Activated naive CD4-positive, alpha-beta T cell treated with anti-CD3 and anti-CD28 coated beads for 36 hours (primary cell): ENCODE measurements at regions of chr2 and their contacts with region 1.

Region 1: GRCh38 chr2:143259368-143259958 is 130.2 kb downstream of the ARHGAP15 start:
- DNase-seq: peak; percentile 89
- H3K4me3 Mint-ChIP-seq: peak overlapping the region; percentile 59
- H3K27ac Mint-ChIP-seq: peak overlapping the region; percentile 90
- H3K4me1 Mint-ChIP-seq: peaks cover 73% of the 10 kb centered on the region
- H3K27me3 Mint-ChIP-seq: no peaks in the 10 kb centered on the region

Region 2: GRCh38 chr2:143110758-143111428 is 148.6 kb before region 1 on chr2:
- CTCF ChIA-PET with region 1: interaction called, 99 read pairs
- intact Hi-C with region 1: loop called (anchors 1 kb)
- DNase-seq: peak; percentile 82
- H3K4me3 Mint-ChIP-seq: peak overlapping the region; percentile 59
- H3K27ac Mint-ChIP-seq: peak overlapping the region; percentile 90
- H3K4me1 Mint-ChIP-seq: peaks cover 46% of the 10 kb centered on the region
- H3K27me3 Mint-ChIP-seq: no peaks in the 10 kb centered on the region

Region 3: DNA sequence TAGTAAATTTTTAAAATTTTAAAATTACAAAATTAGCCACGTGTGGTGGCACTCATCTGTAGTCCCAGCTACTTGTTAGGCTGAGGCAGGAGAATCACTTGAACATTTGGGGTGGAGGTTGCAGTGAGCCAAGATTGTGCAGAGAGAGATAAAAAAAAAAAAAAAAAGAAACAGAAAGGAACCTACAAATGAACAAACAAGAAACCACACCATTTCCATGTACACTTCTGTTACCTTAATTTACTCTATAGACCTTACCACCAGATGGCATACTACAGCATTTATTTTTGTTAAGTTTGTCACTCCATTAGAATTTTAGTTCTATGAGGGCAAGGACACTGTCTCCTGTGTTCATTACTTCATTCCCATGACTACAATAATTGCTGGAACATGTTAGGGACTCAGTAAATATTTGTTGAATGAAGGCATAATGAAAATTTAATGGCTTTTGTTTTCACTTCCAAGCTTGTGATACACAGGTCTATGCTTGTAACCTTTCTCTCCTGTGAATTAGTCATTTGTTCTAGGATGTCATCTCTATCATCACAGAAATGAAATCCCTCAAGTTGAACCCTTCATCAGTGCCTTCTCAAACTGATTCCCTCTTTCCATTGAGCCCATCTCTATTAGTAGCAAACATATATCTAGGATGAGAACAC is 54.2 kb before region 1 on chr2:
- CTCF ChIA-PET with region 1: interaction called, 15 read pairs
- intact Hi-C with region 1: loop called (anchors 1 kb)
- DNase-seq: no peak
- H3K4me3 Mint-ChIP-seq: no peak overlapping the region
- H3K27ac Mint-ChIP-seq: peak overlapping the region; percentile 78
- H3K4me1 Mint-ChIP-seq: peaks cover 53% of the 10 kb centered on the region
- H3K27me3 Mint-ChIP-seq: no peaks in the 10 kb centered on the region

Region 4: GRCh38 chr2:143246815-143247744 is 12.4 kb before region 1 on chr2:
- CTCF ChIA-PET with region 1: interaction called, 17 read pairs
- intact Hi-C with region 1: no loop called
- DNase-seq: peak; percentile 27
- H3K4me3 Mint-ChIP-seq: peak overlapping the region; percentile 44
- H3K27ac Mint-ChIP-seq: peak overlapping the region; percentile 43
- H3K4me1 Mint-ChIP-seq: peaks cover 30% of the 10 kb centered on the region
- H3K27me3 Mint-ChIP-seq: no peaks in the 10 kb centered on the region

Region 5: GRCh38 chr2:143477714-143478443 is 218.4 kb after region 1 on chr2:
- CTCF ChIA-PET with region 1: no interaction called
- intact Hi-C with region 1: no loop called
- DNase-seq: no peak
- H3K4me3 Mint-ChIP-seq: no peak overlapping the region
- H3K27ac Mint-ChIP-seq: no peak overlapping the region
- H3K4me1 Mint-ChIP-seq: peaks cover 35% of the 10 kb centered on the region
- H3K27me3 Mint-ChIP-seq: no peaks in the 10 kb centered on the region

Region 6: GRCh38 chr2:143696651-143697050 is 437.2 kb after region 1 on chr2:
- CTCF ChIA-PET with region 1: no interaction called
- intact Hi-C with region 1: loop called (anchors 1 kb)
- DNase-seq: no peak
- H3K4me3 Mint-ChIP-seq: no peak overlapping the region
- H3K27ac Mint-ChIP-seq: no peak overlapping the region
- H3K4me1 Mint-ChIP-seq: peaks cover 39% of the 10 kb centered on the region
- H3K27me3 Mint-ChIP-seq: no peaks in the 10 kb centered on the region

Region 7: DNA sequence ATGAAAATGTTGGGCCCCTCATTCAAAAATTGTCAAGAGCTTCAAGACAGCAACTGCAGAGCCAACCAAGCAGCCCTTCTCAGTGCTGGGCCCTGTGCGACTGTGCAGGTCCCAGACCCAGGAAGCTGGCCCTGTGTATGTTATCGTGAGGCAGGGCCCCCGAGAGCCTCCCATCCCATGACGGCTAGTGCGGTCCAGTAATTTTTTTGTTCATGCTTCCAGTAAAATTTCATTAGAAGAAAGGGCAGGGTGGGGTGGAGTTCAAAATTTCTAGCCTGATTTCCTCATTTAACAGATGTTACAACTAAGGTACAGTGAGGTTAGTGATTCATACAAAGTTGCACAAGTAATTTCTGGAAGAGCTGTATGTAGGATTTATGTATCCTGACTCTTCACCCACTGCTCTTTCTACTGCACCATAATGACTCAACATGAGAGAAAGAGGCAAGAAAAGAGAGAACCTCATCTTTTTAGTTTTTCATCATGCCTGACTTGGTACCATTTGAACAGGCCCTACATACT is 1154.9 kb after region 1 on chr2:
- CTCF ChIA-PET with region 1: no interaction called
- intact Hi-C with region 1: loop called (anchors 1 kb)
- DNase-seq: peak; percentile 10
- H3K4me3 Mint-ChIP-seq: no peak overlapping the region
- H3K27ac Mint-ChIP-seq: no peak overlapping the region
- H3K4me1 Mint-ChIP-seq: peaks cover 17% of the 10 kb centered on the region
- H3K27me3 Mint-ChIP-seq: peaks cover 5% of the 10 kb centered on the region